HCT116 (cell line): ENCODE measurements at regions of chr11 and their contacts with region 1.

Region 1: GRCh38 chr11:47152953-47153950 is 23.4 kb downstream of the ARFGAP2 start:
- DNase-seq: no peak
- ATAC-seq: peak; percentile 87
- H3K4me3 ChIP-seq: no peak overlapping the region
- H3K27ac ChIP-seq: no peak overlapping the region
- H3K4me1 ChIP-seq: no peaks in the 10 kb centered on the region
- H3K27me3 ChIP-seq: no peaks in the 10 kb centered on the region
- CTCF ChIP-seq: peak; percentile 90 to 98 (median 97)
- POLR2A ChIP-seq: no peak
- RAD21 ChIP-seq: peak; percentile 94

Region 2: GRCh38 chr11:46889689-46890475 is 263.4 kb before region 1 on chr11:
- CTCF ChIA-PET with region 1: interaction called, 16 read pairs
- POLR2A ChIA-PET with region 1: no interaction called
- RAD21 ChIA-PET with region 1: interaction called in 1 of 2 experiments, 4 read pairs
- intact Hi-C with region 1: loop called (anchors 1 kb)
- DNase-seq: peak; percentile 47
- ATAC-seq: peak; percentile 87
- H3K4me3 ChIP-seq: no peak overlapping the region
- H3K27ac ChIP-seq: no peak overlapping the region
- H3K4me1 ChIP-seq: no peaks in the 10 kb centered on the region
- H3K27me3 ChIP-seq: no peaks in the 10 kb centered on the region
- CTCF ChIP-seq: peak; percentile 82 to 94 (median 90)
- POLR2A ChIP-seq: no peak
- RAD21 ChIP-seq: peak; percentile 93

Region 3: DNA sequence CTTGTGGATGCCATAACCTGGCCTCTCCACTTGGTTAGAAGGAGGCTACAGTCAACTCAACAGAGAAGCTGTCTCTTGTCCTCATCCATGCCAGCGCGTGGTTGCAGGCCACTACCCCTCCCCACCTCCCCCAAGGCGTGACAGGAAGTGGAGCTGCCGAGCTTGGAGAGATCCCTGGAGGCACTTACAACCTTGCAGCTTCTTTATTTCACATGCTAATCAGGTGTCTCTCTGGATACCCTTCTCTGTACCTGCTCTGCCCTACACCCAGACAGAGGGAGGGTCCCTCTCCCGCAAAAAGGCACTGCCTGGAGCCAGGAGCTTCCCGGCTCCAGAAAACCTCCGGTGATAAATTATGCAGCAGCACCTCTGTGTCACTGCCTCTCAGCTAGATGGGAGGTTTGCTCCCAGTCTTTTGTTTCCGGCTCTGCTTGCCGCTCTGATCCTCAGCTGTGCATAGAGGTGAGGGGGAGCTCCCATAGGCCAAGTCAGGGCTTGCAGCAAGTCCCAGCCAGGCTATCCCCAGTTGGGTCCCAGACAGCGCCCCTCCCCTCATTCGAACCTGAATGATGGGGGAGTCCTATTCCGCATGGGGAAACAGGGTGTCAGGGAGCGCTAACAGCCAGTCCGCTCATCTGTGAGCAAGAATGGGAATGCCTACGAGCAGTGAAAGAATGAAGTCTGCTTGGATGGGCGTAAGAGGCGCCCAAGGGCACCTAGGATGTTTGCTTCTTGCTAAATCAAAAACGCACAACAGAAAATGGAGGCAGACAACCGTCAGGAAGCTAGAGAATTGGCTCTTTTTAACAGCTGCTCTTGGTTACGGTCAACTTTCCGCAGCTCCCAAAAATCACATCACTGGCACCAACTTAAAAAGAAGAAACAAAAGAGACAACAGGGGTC is 240.5 kb before region 1 on chr11:
- CTCF ChIA-PET with region 1: interaction called, 11 read pairs
- POLR2A ChIA-PET with region 1: no interaction called
- RAD21 ChIA-PET with region 1: no interaction called
- intact Hi-C with region 1: no loop called
- DNase-seq: no peak
- ATAC-seq: no peak
- H3K4me3 ChIP-seq: no peak overlapping the region
- H3K27ac ChIP-seq: no peak overlapping the region
- H3K4me1 ChIP-seq: peaks cover 4 to 8% of the 10 kb centered on the region in 2 experiments; a peak in 1 of 4 replicates
- H3K27me3 ChIP-seq: no peaks in the 10 kb centered on the region
- CTCF ChIP-seq: no peak
- POLR2A ChIP-seq: no peak
- RAD21 ChIP-seq: no peak

Region 4: DNA sequence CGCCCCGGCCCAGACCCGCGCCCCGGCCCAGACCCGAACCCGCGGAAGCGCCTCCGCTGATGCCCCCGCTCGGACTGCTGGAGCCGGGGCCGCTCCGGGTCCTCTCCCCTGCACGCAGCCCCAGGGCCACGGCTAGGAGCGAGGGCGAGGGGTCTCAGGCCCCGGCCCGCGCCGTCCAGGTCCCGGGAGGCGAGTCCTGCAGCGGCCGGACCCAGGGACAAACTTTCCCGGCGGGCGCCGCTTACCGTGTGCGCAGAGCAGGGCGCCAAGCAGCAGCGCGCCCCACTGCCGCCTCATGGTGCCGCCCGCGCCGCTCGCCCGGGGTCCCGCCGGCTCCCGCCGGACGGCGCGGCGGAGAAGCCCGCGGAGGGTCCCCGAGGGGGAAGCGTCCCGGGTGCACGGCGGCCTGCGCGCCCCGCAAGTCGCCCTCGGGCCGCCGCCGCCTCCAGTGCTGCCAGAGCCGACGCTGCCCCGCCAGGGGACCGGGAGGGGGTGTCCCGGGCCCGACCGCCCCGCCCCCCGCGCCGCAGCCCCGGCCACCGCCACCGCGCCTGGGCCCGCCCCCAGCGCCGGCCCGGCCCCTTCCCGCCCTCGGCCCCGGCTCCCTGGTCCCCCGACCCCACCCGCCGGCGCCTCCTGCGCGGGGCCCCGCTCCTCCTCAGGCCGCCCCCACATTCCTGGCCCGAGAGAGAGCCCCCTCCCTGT is 235.0 kb before region 1 on chr11 and contains the start of gene LRP4:
- CTCF ChIA-PET with region 1: interaction called, 14 read pairs
- POLR2A ChIA-PET with region 1: no interaction called
- RAD21 ChIA-PET with region 1: no interaction called
- intact Hi-C with region 1: loop called (anchors 1 kb)
- DNase-seq: no peak
- ATAC-seq: peak; percentile 89
- H3K4me3 ChIP-seq: peak within 1 kb of the TSS; percentile 38 to 62
- H3K27ac ChIP-seq: peak within 1 kb of the TSS; percentile 46; the same call in 1 of the 2 replicates
- H3K4me1 ChIP-seq: peaks cover 13 to 24% of the 10 kb centered on the region in 2 experiments; a peak in 3 of 4 replicates
- H3K27me3 ChIP-seq: no peaks in the 10 kb centered on the region
- CTCF ChIP-seq: no peak
- POLR2A ChIP-seq: no peak
- RAD21 ChIP-seq: no peak
- total RNA-seq, gene LRP4: 7.4 TPM

Region 5: GRCh38 chr11:47253660-47254059 is 100.4 kb after region 1 on chr11:
- CTCF ChIA-PET with region 1: no interaction called
- POLR2A ChIA-PET with region 1: no interaction called
- RAD21 ChIA-PET with region 1: no interaction called
- intact Hi-C with region 1: no loop called
- DNase-seq: no peak
- ATAC-seq: no peak
- H3K4me3 ChIP-seq: no peak overlapping the region
- H3K27ac ChIP-seq: no peak overlapping the region
- H3K4me1 ChIP-seq: peaks cover 6 to 12% of the 10 kb centered on the region in 2 experiments; a peak in 3 of 4 replicates
- H3K27me3 ChIP-seq: no peaks in the 10 kb centered on the region
- CTCF ChIP-seq: no peak
- POLR2A ChIP-seq: no peak
- RAD21 ChIP-seq: no peak